Calu3 (cell line): ENCODE measurements at regions of chr14 and their contacts with region 1.

Region 1: GRCh38 chr14:69107407-69108003 is 45.4 kb downstream of the DCAF5 start:
- DNase-seq: peak; percentile 66
- H3K4me3 Mint-ChIP-seq: no peak overlapping the region
- H3K27ac Mint-ChIP-seq: no peak overlapping the region
- H3K4me1 Mint-ChIP-seq: peaks cover 4% of the 10 kb centered on the region
- H3K27me3 Mint-ChIP-seq: no peaks in the 10 kb centered on the region
- CTCF ChIP-seq: peak; percentile 58

Region 2: GRCh38 chr14:68862954-68863594 is 244.4 kb before region 1 on chr14:
- CTCF ChIA-PET with region 1: interaction called, 12 read pairs
- intact Hi-C with region 1: loop called (anchors 1 kb)
- DNase-seq: peak; percentile 82
- H3K4me3 Mint-ChIP-seq: no peak overlapping the region
- H3K27ac Mint-ChIP-seq: no peak overlapping the region
- H3K4me1 Mint-ChIP-seq: no peaks in the 10 kb centered on the region
- H3K27me3 Mint-ChIP-seq: no peaks in the 10 kb centered on the region
- CTCF ChIP-seq: peak; percentile 81

Region 3: GRCh38 chr14:68911594-68912227 is 195.8 kb before region 1 on chr14:
- CTCF ChIA-PET with region 1: interaction called, 8 read pairs
- intact Hi-C with region 1: loop called (anchors 1 kb)
- DNase-seq: peak; percentile 79
- H3K4me3 Mint-ChIP-seq: no peak overlapping the region
- H3K27ac Mint-ChIP-seq: peak overlapping the region; percentile 67
- H3K4me1 Mint-ChIP-seq: no peaks in the 10 kb centered on the region
- H3K27me3 Mint-ChIP-seq: no peaks in the 10 kb centered on the region
- CTCF ChIP-seq: peak; percentile 93

Region 4: DNA sequence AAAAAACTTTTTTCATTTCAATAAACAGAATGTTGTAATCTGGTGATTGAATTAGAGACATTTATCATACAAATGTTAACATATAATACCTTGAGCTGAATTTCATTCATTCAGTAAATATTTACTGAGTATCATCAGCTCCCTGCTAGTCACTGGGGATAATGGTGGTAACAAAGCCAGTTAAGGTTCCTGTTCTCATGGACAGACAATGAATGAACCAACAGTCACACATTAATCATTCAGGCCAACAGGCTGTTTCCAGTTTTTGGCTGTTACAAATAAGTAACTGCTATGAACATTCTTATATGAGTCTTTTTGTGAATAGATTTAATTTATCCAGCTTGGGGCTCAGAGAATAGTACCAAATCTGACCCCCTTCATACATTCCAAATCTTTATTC is 97.2 kb after region 1 on chr14:
- CTCF ChIA-PET with region 1: interaction called, 11 read pairs
- intact Hi-C with region 1: no loop called
- DNase-seq: no peak
- H3K4me3 Mint-ChIP-seq: no peak overlapping the region
- H3K27ac Mint-ChIP-seq: no peak overlapping the region
- H3K4me1 Mint-ChIP-seq: no peaks in the 10 kb centered on the region
- H3K27me3 Mint-ChIP-seq: no peaks in the 10 kb centered on the region
- CTCF ChIP-seq: no peak